ENCODE measurements at regions of chr11 and their contacts with region 1.

Region 1: GRCh38 chr11:61899146-61899841 is 7.9 kb upstream of the FADS3 start:
- ATAC-seq: peak; percentile 62 to 91 (median 80)
- H3K4me3 ChIP-seq: no peak overlapping the region
- H3K27ac ChIP-seq: peak overlapping the region; percentile 49 to 66
- H3K4me1 ChIP-seq: peaks cover 27 to 29% of the 10 kb centered on the region in 2 donors

Region 2: GRCh38 chr11:61752117-61752924 is 147.0 kb before region 1 on chr11 and contains the start of gene MYRF:
- in situ Hi-C with region 1: no loop called
- ATAC-seq: peak; percentile 60 to 93 (median 70)
- H3K4me3 ChIP-seq: peak within 1 kb of the TSS; percentile 39 to 49 (median 43)
- H3K27ac ChIP-seq: no peak within 1 kb of the TSS
- H3K4me1 ChIP-seq: peaks cover 26 to 58% of the 10 kb centered on the region in 2 donors
- total RNA-seq, gene MYRF: 0.92 to 4.0 (median 2.3) TPM

Region 3: GRCh38 chr11:61947486-61948210 is 48.4 kb after region 1 on chr11:
- in situ Hi-C with region 1: loop called in 2 of 9 experiments (anchors 5 to 10 kb)
- ATAC-seq: peak; percentile 27 to 78 (median 45)
- H3K4me3 ChIP-seq: no peak overlapping the region
- H3K27ac ChIP-seq: peak overlapping the region in 1 of 2 donors; percentile 52
- H3K4me1 ChIP-seq: peaks cover 39 to 41% of the 10 kb centered on the region in 2 donors

Region 4: GRCh38 chr11:62054484-62055121 is 155.3 kb after region 1 on chr11:
- in situ Hi-C with region 1: loop called in 1 of 9 experiments (anchors 25 kb)
- ATAC-seq: peak in 7 of 8 experiments; percentile 42 to 67 (median 48)
- H3K4me3 ChIP-seq: no peak overlapping the region
- H3K27ac ChIP-seq: no peak overlapping the region
- H3K4me1 ChIP-seq: no peaks in the 10 kb centered on the region

Region 5: DNA sequence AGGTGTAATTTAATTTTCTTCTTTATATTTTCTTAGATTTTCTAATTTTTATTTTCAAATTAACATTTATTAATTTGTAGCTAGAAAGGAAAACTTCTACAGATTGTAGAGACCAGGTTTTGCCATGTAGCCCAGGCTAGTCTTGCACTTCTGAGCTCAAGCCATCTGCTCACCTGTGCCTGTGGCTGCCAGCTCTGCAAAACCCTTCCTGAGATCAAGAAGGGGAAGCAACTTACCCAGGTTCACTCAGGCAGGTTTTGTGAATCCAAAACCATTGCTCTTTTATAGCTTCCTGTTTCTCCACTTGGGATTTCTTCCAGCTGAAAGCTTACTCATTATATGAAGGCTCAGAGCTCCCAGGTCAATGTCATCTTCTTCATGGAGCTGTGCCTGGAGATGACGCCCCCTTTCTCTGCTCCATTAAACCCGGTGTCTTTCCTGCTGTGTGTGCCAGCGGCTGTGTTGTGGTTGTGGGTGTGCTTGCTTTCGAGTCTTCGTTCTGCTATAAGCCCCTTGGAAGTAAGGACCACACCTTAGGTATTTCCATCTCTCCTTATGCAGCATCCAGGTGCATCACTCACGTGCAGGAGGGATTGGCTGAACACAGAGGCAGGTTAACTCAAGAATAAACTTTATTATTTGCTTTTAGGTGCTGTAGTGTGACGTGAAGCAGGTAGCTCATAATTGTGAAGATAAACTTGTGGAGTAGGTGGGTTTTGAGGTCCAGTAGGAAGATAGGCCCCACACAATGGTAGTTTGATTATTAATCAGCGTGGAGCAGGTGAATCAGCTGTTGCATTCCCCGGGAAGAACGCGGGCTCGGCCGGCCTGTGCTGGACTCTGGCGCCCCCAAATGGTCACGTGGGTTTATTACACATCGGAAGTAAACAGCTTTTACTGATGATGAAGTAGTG is 182.3 kb after region 1 on chr11:
- in situ Hi-C with region 1: loop called in 3 of 9 experiments (anchors 25 kb)
- ATAC-seq: peak; percentile 84 to 93 (median 87)
- H3K4me3 ChIP-seq: no peak overlapping the region
- H3K27ac ChIP-seq: no peak overlapping the region
- H3K4me1 ChIP-seq: peaks cover 4 to 6% of the 10 kb centered on the region in 2 donors